ENCODE measurements at regions of chr4 and their contacts with region 1.

Region 1: DNA sequence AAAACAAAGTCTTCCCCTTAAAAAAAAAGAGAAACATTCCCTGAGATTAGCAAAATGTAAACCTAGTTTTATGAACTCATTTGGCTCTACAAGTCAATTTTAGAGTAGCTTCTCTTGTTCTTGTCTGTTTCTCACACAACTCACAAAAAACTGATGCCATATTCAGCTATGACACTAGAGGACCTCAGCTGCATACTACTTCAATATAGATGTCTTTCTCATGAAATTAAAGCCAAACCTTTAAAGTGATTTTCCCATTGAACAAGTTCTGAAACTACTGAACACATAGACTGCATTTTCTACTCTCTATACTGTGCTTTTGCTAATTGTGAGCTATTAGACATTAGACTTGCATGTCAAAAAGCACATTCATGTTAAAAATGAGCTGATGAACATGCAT is 49.8 kb downstream of the TBCK start:
- DNase-seq: no peak
- H3K4me3 ChIP-seq: no peak overlapping the region
- H3K27ac ChIP-seq: no peak overlapping the region
- H3K4me1 ChIP-seq: no peaks in the 10 kb centered on the region
- H3K27me3 ChIP-seq: no peaks in the 10 kb centered on the region
- CTCF ChIP-seq: peak; percentile 60

Region 2: GRCh38 chr4:106208481-106209460 is 57.4 kb before region 1 on chr4:
- CTCF ChIA-PET with region 1: no interaction called
- POLR2A ChIA-PET with region 1: no interaction called
- intact Hi-C with region 1: no loop called
- DNase-seq: no peak
- H3K4me3 ChIP-seq: no peak overlapping the region
- H3K27ac ChIP-seq: no peak overlapping the region
- H3K4me1 ChIP-seq: no peaks in the 10 kb centered on the region
- H3K27me3 ChIP-seq: no peaks in the 10 kb centered on the region
- CTCF ChIP-seq: no peak

Region 3: DNA sequence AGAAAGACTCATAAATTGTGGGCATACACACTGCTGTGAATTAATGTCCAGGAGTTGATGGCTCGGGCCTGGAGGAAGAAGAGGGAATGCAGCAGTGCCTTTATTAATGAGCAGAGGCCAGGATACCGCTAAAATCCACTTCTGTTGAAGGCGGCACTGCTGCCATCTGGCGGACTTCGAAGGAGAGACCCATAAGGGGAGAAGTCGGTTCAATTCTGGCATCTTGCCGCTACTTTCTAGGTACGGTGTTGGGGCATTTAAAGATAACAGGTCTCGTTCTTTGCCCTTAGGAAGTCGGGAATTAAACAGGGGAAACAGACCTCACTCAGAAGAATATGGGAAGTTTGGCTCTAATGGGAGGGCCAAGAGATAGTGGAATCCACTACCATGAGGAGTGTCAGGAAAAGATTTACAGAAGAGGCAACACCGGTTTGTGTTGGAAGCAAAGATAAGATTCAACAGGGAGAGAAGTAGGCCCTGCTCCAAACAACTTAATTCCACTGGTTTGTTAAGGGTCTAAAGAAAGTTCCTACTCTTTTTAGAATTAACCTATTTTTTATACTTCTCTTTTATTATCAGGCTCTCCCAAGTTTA is 236.0 kb after region 1 on chr4:
- CTCF ChIA-PET with region 1: interaction called, 3 read pairs
- POLR2A ChIA-PET with region 1: no interaction called
- intact Hi-C with region 1: loop called (anchors 10 kb)
- DNase-seq: peak in 1 of 2 experiments; percentile 42
- H3K4me3 ChIP-seq: no peak overlapping the region
- H3K27ac ChIP-seq: no peak overlapping the region
- H3K4me1 ChIP-seq: no peaks in the 10 kb centered on the region
- H3K27me3 ChIP-seq: no peaks in the 10 kb centered on the region
- CTCF ChIP-seq: peak; percentile 67

Measured in PC-9 (cell line).